ENCODE measurements at regions of chr11 and their contacts with region 1.

Region 1: DNA sequence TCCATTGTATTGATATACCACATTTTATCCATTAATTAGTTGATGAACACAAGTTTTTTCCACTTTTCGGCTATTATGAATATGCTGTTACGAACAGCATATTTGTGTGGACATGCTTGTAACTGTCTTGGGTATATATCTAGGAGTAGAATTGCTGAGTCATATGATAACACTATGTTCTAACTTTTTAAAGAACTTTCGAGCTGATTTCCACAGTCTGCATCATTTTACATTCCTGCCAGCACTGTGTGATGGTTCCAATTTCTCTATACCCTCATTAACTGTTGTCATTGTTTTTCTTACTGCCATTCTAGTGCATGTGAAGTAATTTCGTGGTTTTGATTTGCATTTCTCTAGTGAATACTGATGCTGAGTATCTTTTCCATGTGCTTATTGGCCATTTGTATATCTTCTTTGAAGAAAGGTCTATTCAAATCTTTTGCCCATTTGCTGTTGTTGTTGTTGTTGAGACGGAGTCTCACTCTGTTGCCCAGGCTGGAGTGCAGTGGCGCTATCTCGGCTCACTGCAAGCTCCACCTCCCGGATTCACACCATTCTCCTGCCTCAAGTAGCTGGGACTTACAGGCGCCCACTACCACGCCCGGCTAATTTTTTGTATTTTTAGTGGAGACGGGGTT is 7.4 kb upstream of the RCE1 start:
- DNase-seq: no peak
- H3K4me3 ChIP-seq: no peak overlapping the region
- H3K27ac ChIP-seq: no peak overlapping the region
- H3K4me1 ChIP-seq: no peaks in the 10 kb centered on the region
- H3K27me3 ChIP-seq: no peaks in the 10 kb centered on the region
- CTCF ChIP-seq: no peak

Region 2: GRCh38 chr11:66592457-66593302 is 243.2 kb before region 1 on chr11 and contains the starts of genes CCDC87 and CCS:
- intact Hi-C with region 1: loop called (anchors 10 kb)
- DNase-seq: peak; percentile 99
- H3K4me3 ChIP-seq: peak within 1 kb of the TSS; percentile 65
- H3K27ac ChIP-seq: peak within 1 kb of the TSS; percentile 81
- H3K4me1 ChIP-seq: peaks cover 5% of the 10 kb centered on the region
- H3K27me3 ChIP-seq: no peaks in the 10 kb centered on the region
- CTCF ChIP-seq: peak; percentile 75
- total RNA-seq, gene CCDC87: 0.53 to 0.62 TPM
- total RNA-seq, gene CCS: 31.2 to 41.4 TPM

Region 3: GRCh38 chr11:66694732-66695207 is 141.1 kb before region 1 on chr11:
- intact Hi-C with region 1: loop called (anchors 1 kb)
- DNase-seq: peak; percentile 94
- H3K4me3 ChIP-seq: no peak overlapping the region
- H3K27ac ChIP-seq: no peak overlapping the region
- H3K4me1 ChIP-seq: no peaks in the 10 kb centered on the region
- H3K27me3 ChIP-seq: no peaks in the 10 kb centered on the region
- CTCF ChIP-seq: peak; percentile 97

Region 4: GRCh38 chr11:67022328-67022927 is 186.5 kb after region 1 on chr11:
- intact Hi-C with region 1: no loop called
- DNase-seq: peak; percentile 55
- H3K4me3 ChIP-seq: peak overlapping the region; percentile 11
- H3K27ac ChIP-seq: no peak overlapping the region
- H3K4me1 ChIP-seq: peaks cover 6% of the 10 kb centered on the region
- H3K27me3 ChIP-seq: peaks cover 22% of the 10 kb centered on the region
- CTCF ChIP-seq: no peak